ENCODE measurements at regions of chr17 and their contacts with region 1.

Region 1: GRCh38 chr17:40417609-40418427 is at the start of gene TOP2A:
- DNase-seq: peak; percentile 86 to 99 (median 94)
- ATAC-seq: peak; percentile 99
- H3K4me3 ChIP-seq: peak within 1 kb of the TSS; percentile 72
- H3K4me3 Mint-ChIP-seq: peak within 1 kb of the TSS; percentile 87
- H3K27ac ChIP-seq: peak within 1 kb of the TSS in 1 of 2 donors; percentile 29
- H3K27ac Mint-ChIP-seq: peak within 1 kb of the TSS; percentile 74
- H3K4me1 ChIP-seq: peaks cover 32% of the 10 kb centered on the region
- H3K4me1 Mint-ChIP-seq: peaks cover 28% of the 10 kb centered on the region
- H3K27me3 ChIP-seq: peaks cover 0 to 4% of the 10 kb centered on the region in 2 experiments
- H3K27me3 Mint-ChIP-seq: no peaks in the 10 kb centered on the region
- CTCF ChIP-seq: no peak
- total RNA-seq, gene TOP2A: 3.6 to 3.8 TPM

Region 2: DNA sequence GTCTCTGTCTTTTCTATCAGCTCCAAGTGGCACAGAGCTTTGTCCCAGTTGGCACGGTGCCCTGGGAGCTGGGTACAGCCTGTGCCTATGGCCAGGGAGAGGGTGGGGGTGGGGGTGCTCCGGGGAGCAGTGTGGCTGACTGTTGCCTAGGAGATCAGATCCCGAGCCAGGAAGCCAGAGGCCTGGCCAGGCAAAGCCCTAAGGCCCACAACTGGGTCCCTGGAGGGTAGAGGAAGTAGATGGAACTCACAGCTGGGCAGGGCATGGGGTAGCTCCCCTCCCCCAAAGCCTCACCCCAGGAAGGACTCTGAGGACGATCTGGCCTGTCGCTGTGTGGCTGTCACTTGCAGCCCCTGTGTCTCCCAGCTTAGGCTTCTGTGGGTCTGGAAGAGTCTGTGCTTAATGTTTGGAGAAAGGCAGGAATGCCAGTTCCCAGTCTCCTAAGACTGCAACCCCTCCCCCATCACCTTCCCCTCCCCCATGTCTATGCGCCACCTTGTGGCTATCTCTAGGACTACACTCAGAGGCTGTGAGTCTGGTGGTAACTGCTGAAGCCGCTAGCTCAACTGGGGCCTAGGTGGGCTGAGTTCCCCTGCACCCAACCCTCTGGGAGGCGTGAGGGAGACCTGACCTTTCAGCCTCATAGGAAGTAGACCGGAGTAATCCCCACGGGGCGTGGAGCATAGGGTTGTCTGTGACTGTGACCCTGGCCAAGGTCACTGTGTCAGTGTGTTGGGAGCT is 342.4 kb before region 1 on chr17:
- CTCF ChIA-PET with region 1: no interaction called
- POLR2A ChIA-PET with region 1: no interaction called
- intact Hi-C with region 1: no loop called
- DNase-seq: peak; percentile 58 to 82 (median 66)
- ATAC-seq: peak; percentile 91
- H3K4me3 ChIP-seq: no peak overlapping the region
- H3K4me3 Mint-ChIP-seq: no peak overlapping the region
- H3K27ac ChIP-seq: no peak overlapping the region
- H3K27ac Mint-ChIP-seq: peak overlapping the region; percentile 10
- H3K4me1 ChIP-seq: peaks cover 47% of the 10 kb centered on the region
- H3K4me1 Mint-ChIP-seq: peaks cover 50% of the 10 kb centered on the region
- H3K27me3 ChIP-seq: no peaks in the 10 kb centered on the region
- H3K27me3 Mint-ChIP-seq: no peaks in the 10 kb centered on the region
- CTCF ChIP-seq: peak; percentile 89

Region 3: DNA sequence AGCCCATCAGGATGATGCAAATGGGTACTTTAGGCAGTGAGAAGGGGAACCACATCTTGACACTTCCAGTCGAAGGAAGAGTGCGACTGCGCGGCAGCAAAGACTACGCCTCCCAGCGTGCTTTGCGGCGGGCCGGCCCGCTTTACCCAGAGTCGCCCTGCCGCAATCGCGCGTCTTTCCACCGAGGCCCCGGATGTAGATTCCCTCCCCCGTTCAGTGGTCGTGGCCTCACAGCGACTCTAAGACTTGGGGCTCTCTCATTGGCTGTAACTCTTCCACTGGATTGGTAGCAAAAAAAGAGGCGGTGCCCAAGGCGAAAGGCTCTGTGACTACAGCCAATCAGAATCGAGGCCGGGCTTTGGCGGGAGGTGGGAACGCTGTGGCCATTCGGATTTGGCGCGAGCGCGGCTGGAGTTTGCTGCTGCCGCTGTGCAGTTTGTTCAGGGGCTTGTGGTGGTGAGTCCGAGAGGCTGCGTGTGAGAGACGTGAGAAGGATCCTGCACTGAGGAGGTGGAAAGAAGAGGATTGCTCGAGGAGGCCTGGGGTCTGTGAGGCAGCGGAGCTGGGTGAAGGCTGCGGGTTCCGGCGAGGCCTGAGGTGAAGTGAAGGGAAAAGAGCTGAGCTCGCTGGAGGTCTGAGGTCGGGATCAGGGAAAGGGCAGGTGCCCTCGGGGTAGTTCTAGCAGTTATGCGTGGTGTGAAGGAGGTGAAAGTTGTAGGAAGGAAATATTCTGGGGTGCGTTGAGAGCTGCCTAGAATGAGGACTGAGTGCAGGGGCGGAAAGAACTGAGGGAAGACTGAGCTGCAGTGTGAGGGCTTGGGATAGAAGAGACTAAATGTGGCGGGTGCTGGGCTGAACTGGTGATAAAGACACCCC is 130.1 kb before region 1 on chr17 and contains the start of gene CDC6:
- CTCF ChIA-PET with region 1: no interaction called
- POLR2A ChIA-PET with region 1: no interaction called
- intact Hi-C with region 1: loop called in 1 of 2 experiments (anchors 5 kb)
- DNase-seq: peak; percentile 94 to 100 (median 97)
- ATAC-seq: peak; percentile 92
- H3K4me3 ChIP-seq: peak within 1 kb of the TSS; percentile 88
- H3K4me3 Mint-ChIP-seq: peak within 1 kb of the TSS; percentile 95
- H3K27ac ChIP-seq: no peak within 1 kb of the TSS
- H3K27ac Mint-ChIP-seq: peak within 1 kb of the TSS; percentile 60
- H3K4me1 ChIP-seq: peaks cover 24% of the 10 kb centered on the region
- H3K4me1 Mint-ChIP-seq: peaks cover 32% of the 10 kb centered on the region
- H3K27me3 ChIP-seq: no peaks in the 10 kb centered on the region
- H3K27me3 Mint-ChIP-seq: no peaks in the 10 kb centered on the region
- CTCF ChIP-seq: no peak
- total RNA-seq, gene CDC6: 1.0 to 1.8 TPM

Region 4: GRCh38 chr17:40362696-40363110 is 55.1 kb before region 1 on chr17:
- CTCF ChIA-PET with region 1: interaction called, 9 read pairs
- POLR2A ChIA-PET with region 1: interaction called, 3 read pairs
- intact Hi-C with region 1: loop called (anchors 2 to 10 kb)
- DNase-seq: peak; percentile 68 to 87 (median 74)
- ATAC-seq: peak; percentile 82
- H3K4me3 ChIP-seq: peak overlapping the region; percentile 36
- H3K4me3 Mint-ChIP-seq: peak overlapping the region; percentile 14
- H3K27ac ChIP-seq: no peak overlapping the region
- H3K27ac Mint-ChIP-seq: no peak overlapping the region
- H3K4me1 ChIP-seq: peaks cover 23% of the 10 kb centered on the region
- H3K4me1 Mint-ChIP-seq: peaks cover 16% of the 10 kb centered on the region
- H3K27me3 ChIP-seq: peaks cover 0 to 13% of the 10 kb centered on the region in 2 experiments
- H3K27me3 Mint-ChIP-seq: peaks cover 17% of the 10 kb centered on the region
- CTCF ChIP-seq: peak; percentile 56

Region 5: DNA sequence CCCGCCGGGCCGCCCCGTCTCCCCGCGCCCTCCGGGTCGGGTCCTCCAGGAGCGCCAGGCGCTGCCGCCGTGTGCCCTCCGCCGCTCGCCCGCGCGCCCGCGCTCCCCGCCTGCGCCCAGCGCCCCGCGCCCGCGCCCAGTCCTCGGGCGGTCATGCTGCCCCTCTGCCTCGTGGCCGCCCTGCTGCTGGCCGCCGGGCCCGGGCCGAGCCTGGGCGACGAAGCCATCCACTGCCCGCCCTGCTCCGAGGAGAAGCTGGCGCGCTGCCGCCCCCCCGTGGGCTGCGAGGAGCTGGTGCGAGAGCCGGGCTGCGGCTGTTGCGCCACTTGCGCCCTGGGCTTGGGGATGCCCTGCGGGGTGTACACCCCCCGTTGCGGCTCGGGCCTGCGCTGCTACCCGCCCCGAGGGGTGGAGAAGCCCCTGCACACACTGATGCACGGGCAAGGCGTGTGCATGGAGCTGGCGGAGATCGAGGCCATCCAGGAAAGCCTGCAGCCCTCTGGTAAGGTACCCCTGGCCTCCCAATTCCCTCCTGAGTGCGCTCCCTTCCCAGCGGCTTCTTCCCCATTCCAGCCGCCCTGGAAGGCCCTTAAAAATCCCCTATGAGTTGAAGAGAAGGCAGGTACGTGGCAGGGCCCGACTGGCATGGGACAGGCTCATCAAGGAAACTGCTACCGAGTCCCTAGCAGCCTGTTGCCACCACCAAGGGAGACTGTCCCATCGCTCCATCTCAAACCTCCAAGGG is 25.9 kb after region 1 on chr17:
- CTCF ChIA-PET with region 1: interaction called, 10 read pairs
- POLR2A ChIA-PET with region 1: interaction called, 14 read pairs
- intact Hi-C with region 1: no loop called
- DNase-seq: peak; percentile 41 to 84 (median 66)
- ATAC-seq: peak; percentile 76
- H3K4me3 ChIP-seq: peak overlapping the region; percentile 62
- H3K4me3 Mint-ChIP-seq: peak overlapping the region; percentile 89
- H3K27ac ChIP-seq: no peak overlapping the region
- H3K27ac Mint-ChIP-seq: peak overlapping the region; percentile 85
- H3K4me1 ChIP-seq: peaks cover 46% of the 10 kb centered on the region
- H3K4me1 Mint-ChIP-seq: peaks cover 37% of the 10 kb centered on the region
- H3K27me3 ChIP-seq: no peaks in the 10 kb centered on the region
- H3K27me3 Mint-ChIP-seq: peaks cover 6% of the 10 kb centered on the region
- CTCF ChIP-seq: peak; percentile 63

Region 6: GRCh38 chr17:40542558-40543411 is 125.0 kb after region 1 on chr17:
- CTCF ChIA-PET with region 1: interaction called, 3 read pairs
- POLR2A ChIA-PET with region 1: interaction called, 26 read pairs
- intact Hi-C with region 1: no loop called
- DNase-seq: peak in 5 of 14 experiments; percentile 32 to 80 (median 45)
- ATAC-seq: no peak
- H3K4me3 ChIP-seq: no peak overlapping the region
- H3K4me3 Mint-ChIP-seq: peak overlapping the region; percentile 72
- H3K27ac ChIP-seq: peak overlapping the region in 1 of 2 donors; percentile 79
- H3K27ac Mint-ChIP-seq: peak overlapping the region; percentile 94
- H3K4me1 ChIP-seq: peaks cover 94% of the 10 kb centered on the region
- H3K4me1 Mint-ChIP-seq: peaks cover 83% of the 10 kb centered on the region
- H3K27me3 ChIP-seq: no peaks in the 10 kb centered on the region
- H3K27me3 Mint-ChIP-seq: no peaks in the 10 kb centered on the region
- CTCF ChIP-seq: no peak